T-cell (primary cell): ENCODE measurements at regions of chr11 and their contacts with region 1.

Region 1: DNA sequence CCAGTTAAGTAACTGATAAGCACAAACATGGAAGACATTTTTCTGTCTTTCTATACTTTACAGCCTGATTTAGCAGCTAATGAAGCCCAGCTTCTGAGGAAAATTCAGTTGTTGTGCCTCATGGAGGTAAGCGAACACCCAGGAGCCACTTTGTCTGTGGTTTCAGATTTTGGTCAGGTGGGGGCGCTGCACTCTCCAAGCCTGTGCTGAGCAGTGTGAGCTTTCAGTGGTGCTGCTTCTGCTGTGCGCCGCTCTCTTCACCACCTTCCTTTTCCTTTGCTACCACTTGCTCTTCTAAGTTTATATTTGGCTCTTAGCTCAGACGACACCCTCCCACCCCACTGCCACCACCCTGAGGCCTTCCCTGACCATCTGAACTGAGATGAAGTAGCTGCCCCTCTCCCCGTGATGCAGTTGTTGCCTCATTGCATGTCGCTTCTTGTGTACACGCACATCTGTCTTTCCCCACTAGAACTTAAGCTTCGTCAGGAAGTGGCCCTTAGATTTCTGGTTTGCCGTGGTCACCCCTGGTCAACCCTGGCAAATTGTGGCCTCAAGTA is 14.0 kb downstream of the PSMD13 start:
- DNase-seq: peak; percentile 70 to 89 (median 80)
- ATAC-seq: peak; percentile 91 to 99 (median 96)
- H3K4me3 ChIP-seq: no peak overlapping the region
- H3K4me3 Mint-ChIP-seq: no peak overlapping the region
- H3K27ac ChIP-seq: no peak overlapping the region
- H3K27ac Mint-ChIP-seq: peak overlapping the region; percentile 37 to 88
- H3K4me1 ChIP-seq: peaks cover 2 to 6% of the 10 kb centered on the region in 2 experiments
- H3K4me1 Mint-ChIP-seq: peaks cover 10 to 15% (median 11%) of the 10 kb centered on the region in 3 donors
- H3K27me3 ChIP-seq: no peaks in the 10 kb centered on the region
- H3K27me3 Mint-ChIP-seq: no peaks in the 10 kb centered on the region

Region 2: GRCh38 chr11:267491-268088 is 16.8 kb after region 1 on chr11:
- CTCF ChIA-PET with region 1: interaction called, 3 to 23 read pairs
- POLR2A ChIA-PET with region 1: no interaction called
- DNase-seq: peak in 29 of 35 experiments; percentile 25 to 75 (median 54)
- ATAC-seq: peak; percentile 40 to 58 (median 52)
- H3K4me3 ChIP-seq: peak overlapping the region; percentile 53 to 60
- H3K4me3 Mint-ChIP-seq: peak overlapping the region; percentile 81 to 85 (median 83)
- H3K27ac ChIP-seq: peak overlapping the region; percentile 88
- H3K27ac Mint-ChIP-seq: peak overlapping the region; percentile 98
- H3K4me1 ChIP-seq: peaks cover 14 to 34% of the 10 kb centered on the region in 2 experiments
- H3K4me1 Mint-ChIP-seq: peaks cover 27 to 40% (median 35%) of the 10 kb centered on the region in 3 donors
- H3K27me3 ChIP-seq: no peaks in the 10 kb centered on the region
- H3K27me3 Mint-ChIP-seq: no peaks in the 10 kb centered on the region

Region 3: GRCh38 chr11:288328-289144 is 37.7 kb after region 1 on chr11 and contains the start of gene PGGHG:
- CTCF ChIA-PET with region 1: interaction called in 1 of 2 experiments, 17 read pairs
- POLR2A ChIA-PET with region 1: no interaction called
- DNase-seq: peak in 13 of 35 experiments; percentile 23 to 70 (median 55)
- ATAC-seq: peak; percentile 24 to 64 (median 46)
- H3K4me3 ChIP-seq: peak within 1 kb of the TSS; percentile 77 to 97
- H3K4me3 Mint-ChIP-seq: peak within 1 kb of the TSS; percentile 92 to 99 (median 99)
- H3K27ac ChIP-seq: peak within 1 kb of the TSS; percentile 84
- H3K27ac Mint-ChIP-seq: peak within 1 kb of the TSS; percentile 96 to 99
- H3K4me1 ChIP-seq: peaks cover 16 to 67% of the 10 kb centered on the region in 2 experiments
- H3K4me1 Mint-ChIP-seq: peaks cover 31 to 52% (median 37%) of the 10 kb centered on the region in 3 donors
- H3K27me3 ChIP-seq: peaks cover 0 to 35% of the 10 kb centered on the region in 2 experiments
- H3K27me3 Mint-ChIP-seq: no peaks in the 10 kb centered on the region
- total RNA-seq, gene PGGHG: 252 to 818 (median 459) TPM

Region 4: DNA sequence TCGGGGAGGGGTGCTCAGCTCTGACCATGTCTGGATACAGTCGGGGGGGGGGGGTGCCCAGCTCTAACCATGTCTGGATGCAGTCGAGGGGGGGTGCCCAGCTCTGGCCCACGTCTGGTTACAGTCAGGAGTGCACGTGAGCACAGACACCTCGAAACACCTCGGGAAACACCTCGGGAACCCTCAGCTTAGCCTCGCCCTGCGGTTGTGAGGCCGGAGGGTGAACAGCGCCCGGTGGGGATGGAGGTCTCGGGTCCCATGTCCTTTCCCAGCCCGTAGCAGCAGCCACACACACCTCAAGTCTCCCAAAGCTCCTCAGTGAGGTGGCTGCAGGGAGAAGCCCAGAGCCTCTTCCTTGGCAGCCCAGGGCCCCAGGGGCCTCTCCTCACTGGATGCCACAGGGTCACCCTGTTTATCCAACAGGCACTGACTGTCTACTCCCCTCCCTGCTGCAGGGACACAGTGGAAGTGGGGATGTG is 161.9 kb after region 1 on chr11:
- CTCF ChIA-PET with region 1: no interaction called
- POLR2A ChIA-PET with region 1: no interaction called
- DNase-seq: peak in 1 of 35 experiments; percentile 1
- ATAC-seq: no peak
- H3K4me3 ChIP-seq: peak overlapping the region; percentile 57 to 90
- H3K4me3 Mint-ChIP-seq: peak overlapping the region; percentile 74 to 100 (median 79)
- H3K27ac ChIP-seq: peak overlapping the region; percentile 44
- H3K27ac Mint-ChIP-seq: peak overlapping the region; percentile 86 to 90
- H3K4me1 ChIP-seq: peaks cover 13 to 66% of the 10 kb centered on the region in 2 experiments
- H3K4me1 Mint-ChIP-seq: peaks cover 24 to 41% (median 35%) of the 10 kb centered on the region in 3 donors
- H3K27me3 ChIP-seq: no peaks in the 10 kb centered on the region
- H3K27me3 Mint-ChIP-seq: no peaks in the 10 kb centered on the region

Region 5: GRCh38 chr11:447923-448731 is 197.3 kb after region 1 on chr11:
- CTCF ChIA-PET with region 1: interaction called, 3 to 10 read pairs
- POLR2A ChIA-PET with region 1: no interaction called
- DNase-seq: peak; percentile 81 to 98 (median 93)
- ATAC-seq: peak; percentile 65 to 72 (median 65)
- H3K4me3 ChIP-seq: peak overlapping the region; percentile 66 to 83
- H3K4me3 Mint-ChIP-seq: peak overlapping the region; percentile 84 to 87 (median 86)
- H3K27ac ChIP-seq: peak overlapping the region; percentile 91
- H3K27ac Mint-ChIP-seq: peak overlapping the region; percentile 92 to 95
- H3K4me1 ChIP-seq: peaks cover 12 to 38% of the 10 kb centered on the region in 2 experiments
- H3K4me1 Mint-ChIP-seq: peaks cover 9 to 19% (median 19%) of the 10 kb centered on the region in 3 donors
- H3K27me3 ChIP-seq: peaks cover 0 to 5% of the 10 kb centered on the region in 2 experiments
- H3K27me3 Mint-ChIP-seq: no peaks in the 10 kb centered on the region

Region 6: DNA sequence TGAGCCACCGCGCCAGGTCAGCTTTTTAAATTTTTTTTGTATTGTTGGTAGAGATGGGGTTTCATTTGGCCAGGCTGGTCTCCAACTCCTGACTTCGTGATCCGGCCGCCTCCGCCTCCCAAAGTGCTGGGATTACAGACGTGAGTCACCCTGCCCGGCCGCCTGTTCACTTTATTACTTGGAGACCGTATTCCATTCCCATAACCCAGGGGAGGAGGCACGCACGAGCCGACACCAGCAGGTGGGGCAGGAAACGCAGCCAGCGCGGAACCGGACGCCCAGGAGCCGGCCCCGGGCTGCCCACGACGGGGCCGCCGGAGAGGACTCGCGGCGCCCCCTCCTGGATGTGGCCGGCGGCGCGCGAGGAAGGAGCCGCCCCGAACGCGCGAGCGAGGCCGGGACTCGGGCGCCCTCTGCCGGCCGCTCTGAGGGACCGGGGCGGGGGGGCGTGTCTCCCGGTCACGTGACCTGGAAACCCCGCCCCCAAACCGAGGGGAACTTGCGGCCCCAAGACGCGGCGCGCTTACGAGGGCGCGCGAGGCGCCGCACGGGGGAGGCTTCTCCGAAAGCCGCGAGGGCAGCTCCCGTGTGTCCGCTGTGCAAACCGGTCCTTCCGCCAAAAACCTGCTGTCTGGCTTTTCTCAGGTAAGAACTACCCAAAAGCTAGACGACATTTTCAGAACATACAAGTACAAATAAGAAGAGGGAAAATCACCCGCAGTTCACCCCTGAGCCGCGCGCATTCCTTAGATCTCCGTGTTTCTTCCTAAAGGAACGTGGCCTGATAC is 267.8 kb after region 1 on chr11:
- CTCF ChIA-PET with region 1: interaction called in 1 of 2 experiments, 3 read pairs
- POLR2A ChIA-PET with region 1: interaction called in 1 of 2 experiments, 16 read pairs
- DNase-seq: peak; percentile 64 to 97 (median 85)
- ATAC-seq: peak; percentile 84 to 98 (median 94)
- H3K4me3 ChIP-seq: peak overlapping the region; percentile 23 to 28
- H3K4me3 Mint-ChIP-seq: peak overlapping the region; percentile 71 to 83 (median 76)
- H3K27ac ChIP-seq: peak overlapping the region; percentile 44
- H3K27ac Mint-ChIP-seq: peak overlapping the region; percentile 84 to 89
- H3K4me1 ChIP-seq: peaks cover 2 to 7% of the 10 kb centered on the region in 2 experiments
- H3K4me1 Mint-ChIP-seq: peaks cover 4 to 7% (median 5%) of the 10 kb centered on the region in 3 donors
- H3K27me3 ChIP-seq: no peaks in the 10 kb centered on the region
- H3K27me3 Mint-ChIP-seq: no peaks in the 10 kb centered on the region